GM10248 (cell line): ENCODE measurements at regions of chr7 and their contacts with region 1.

Region 1: GRCh38 chr7:87886875-87887274 is 10.6 kb downstream of the DBF4 start:
- DNase-seq: no peak
- CTCF ChIP-seq: peak; percentile 38

Region 2: DNA sequence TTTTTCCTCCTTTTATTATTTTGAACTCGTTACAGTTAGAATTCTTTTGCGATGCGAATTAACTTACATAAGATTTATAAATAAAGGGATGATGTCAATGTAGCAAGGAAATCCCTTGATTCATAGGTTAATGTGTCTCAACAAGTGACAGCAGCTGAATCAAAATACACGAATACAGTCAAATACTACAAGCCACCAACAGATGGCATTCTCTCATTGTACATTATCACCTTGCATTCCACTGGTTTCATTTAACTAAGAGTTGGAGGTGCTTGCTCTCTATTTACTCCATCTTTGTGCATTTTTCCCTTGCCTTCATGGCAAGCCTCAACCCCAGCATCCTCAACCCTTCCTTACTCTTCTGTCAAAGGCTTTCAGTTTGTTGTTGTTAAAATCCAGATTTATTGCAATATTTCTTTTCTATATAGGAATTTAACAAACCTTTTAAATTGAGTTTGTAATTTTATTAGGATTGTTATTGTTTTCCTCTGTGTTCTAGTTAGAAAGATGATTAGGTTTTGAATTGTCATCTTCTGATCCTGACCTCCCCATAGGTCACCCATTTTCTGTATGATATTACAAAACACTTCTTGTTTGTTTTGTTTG is 89.0 kb before region 1 on chr7:
- CTCF ChIA-PET with region 1: interaction called, 26 read pairs
- POLR2A ChIA-PET with region 1: no interaction called
- DNase-seq: peak; percentile 47
- CTCF ChIP-seq: peak; percentile 65

Region 3: DNA sequence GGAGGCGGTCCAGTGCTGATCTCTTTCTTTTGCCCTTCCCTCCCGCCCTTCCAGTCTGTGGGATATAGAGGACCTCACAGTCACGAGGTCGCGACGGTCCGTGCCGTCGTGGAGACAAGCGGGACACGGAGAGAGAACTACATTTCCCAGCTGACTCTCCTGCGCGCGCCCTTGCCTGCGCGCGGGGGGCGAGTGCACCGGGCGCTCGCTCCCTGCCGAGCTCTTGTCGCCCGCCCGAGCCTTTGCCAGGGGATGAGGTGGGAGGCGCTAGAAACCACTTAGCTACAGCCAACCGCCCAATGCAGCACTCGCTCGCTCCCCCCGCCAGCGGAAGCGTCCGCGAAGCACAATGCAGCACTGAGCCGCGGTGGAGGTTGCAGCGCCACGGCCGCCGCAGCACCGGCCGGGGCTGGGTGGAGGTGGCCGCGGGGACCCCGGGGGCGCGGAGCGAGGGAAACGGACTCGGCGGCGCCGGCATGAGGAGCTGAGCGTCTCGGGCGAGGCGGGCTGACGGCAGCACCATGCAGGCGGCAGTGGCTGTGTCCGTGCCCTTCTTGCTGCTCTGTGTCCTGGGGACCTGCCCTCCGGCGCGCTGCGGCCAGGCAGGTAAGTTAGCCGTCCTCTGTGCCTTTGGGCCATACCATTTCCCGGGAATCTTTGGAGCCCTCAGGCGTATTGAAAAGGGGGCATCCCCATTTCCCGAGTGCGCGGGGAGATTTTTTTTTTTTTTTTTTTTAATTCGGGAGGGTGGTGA is 47.2 kb after region 1 on chr7 and contains the start of gene ADAM22:
- CTCF ChIA-PET with region 1: interaction called, 10 read pairs
- POLR2A ChIA-PET with region 1: interaction called, 6 read pairs
- DNase-seq: peak; percentile 92
- CTCF ChIP-seq: peak; percentile 3